SK-N-SH (cell line): ENCODE measurements at regions of chr3 and their contacts with region 1.

Region 1: DNA sequence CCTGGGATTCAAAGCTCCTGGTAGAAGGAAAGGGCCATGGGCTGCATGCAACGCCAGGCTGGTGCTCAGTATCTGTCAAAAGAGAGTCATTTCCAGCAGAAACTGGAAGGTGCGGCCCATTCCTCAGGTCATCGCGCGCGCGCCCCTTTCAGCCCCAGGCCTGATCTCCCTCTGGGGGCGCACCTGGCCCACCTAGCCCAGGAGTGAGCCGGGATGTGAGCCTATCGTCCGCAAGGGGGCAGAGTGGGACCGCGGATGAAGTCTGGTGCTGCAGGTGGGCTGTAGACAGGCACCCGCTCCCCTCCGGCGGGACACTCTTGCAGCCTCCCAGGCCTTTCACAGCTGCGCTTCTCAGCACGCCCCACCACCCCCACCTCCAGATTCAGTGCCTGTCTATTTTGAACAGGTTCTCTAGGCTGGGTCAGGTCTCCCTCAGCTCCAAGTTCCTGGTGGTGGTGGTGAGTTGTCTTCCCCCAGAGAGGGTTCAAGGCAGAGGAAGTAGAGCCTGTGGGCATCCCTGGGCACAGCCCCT is 5.8 kb upstream of the RPL29 start:
- DNase-seq: peak; percentile 92
- H3K4me3 ChIP-seq: peak overlapping the region in 1 of 2 experiments; percentile 36; a peak in 1 of 4 replicates
- H3K27ac ChIP-seq: peak overlapping the region in 1 of 2 experiments; percentile 61; a peak in 2 of 4 replicates
- H3K4me1 ChIP-seq: peaks cover 20 to 48% of the 10 kb centered on the region in 2 experiments
- H3K27me3 ChIP-seq: no peaks in the 10 kb centered on the region
- CTCF ChIP-seq: peak; percentile 97
- EP300 ChIP-seq: no peak
- RAD21 ChIP-seq: peak; percentile 96

Region 2: GRCh38 chr3:51941798-51942602 is 59.5 kb before region 1 on chr3 and contains the starts of genes PARP3 and RRP9:
- CTCF ChIA-PET with region 1: interaction called, 17 read pairs
- POLR2A ChIA-PET with region 1: interaction called, 3 read pairs
- DNase-seq: peak; percentile 99
- H3K4me3 ChIP-seq: peak within 1 kb of the TSS; percentile 85 to 95
- H3K27ac ChIP-seq: peak within 1 kb of the TSS; percentile 85 to 97
- H3K4me1 ChIP-seq: peaks cover 11 to 18% of the 10 kb centered on the region in 2 experiments; a peak in 3 of 4 replicates
- H3K27me3 ChIP-seq: no peaks in the 10 kb centered on the region
- CTCF ChIP-seq: peak; percentile 98
- EP300 ChIP-seq: no peak; a peak in 1 of 4 replicates
- RAD21 ChIP-seq: peak; percentile 98
- polyA plus RNA-seq, gene PARP3: 31.1 and 35.2 TPM in 2 replicates
- polyA plus RNA-seq, gene RRP9: 49.6 and 52.0 TPM in 2 replicates

Region 3: DNA sequence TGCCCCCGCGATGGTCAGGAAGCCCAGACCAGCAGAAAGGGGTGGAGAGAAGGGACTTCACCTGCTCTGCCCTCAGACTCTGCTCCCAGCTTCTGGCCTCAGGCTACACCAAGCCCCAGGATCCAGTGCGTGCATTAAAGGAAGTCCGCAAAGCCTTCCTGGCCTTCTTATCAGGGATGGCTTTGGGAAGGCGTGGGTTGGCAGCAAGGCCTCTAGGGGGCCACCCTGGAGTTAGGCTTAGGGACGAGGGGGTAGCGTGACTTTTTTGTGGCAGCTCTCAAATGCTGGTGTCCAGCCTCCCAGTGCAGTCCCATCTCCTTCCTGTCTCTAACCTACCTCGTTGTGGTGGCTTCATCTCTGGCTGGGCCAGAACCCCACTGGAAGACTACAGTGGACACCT is 13.1 kb after region 1 on chr3:
- CTCF ChIA-PET with region 1: interaction called, 159 read pairs
- POLR2A ChIA-PET with region 1: interaction called, 4 read pairs
- DNase-seq: no peak
- H3K4me3 ChIP-seq: no peak overlapping the region
- H3K27ac ChIP-seq: peak overlapping the region in 1 of 2 experiments; percentile 98; a peak in 2 of 4 replicates
- H3K4me1 ChIP-seq: peaks cover 0 to 57% of the 10 kb centered on the region in 2 experiments; a peak in 1 of 4 replicates
- H3K27me3 ChIP-seq: no peaks in the 10 kb centered on the region
- CTCF ChIP-seq: peak; percentile 47
- EP300 ChIP-seq: no peak
- RAD21 ChIP-seq: peak; percentile 49

Region 4: DNA sequence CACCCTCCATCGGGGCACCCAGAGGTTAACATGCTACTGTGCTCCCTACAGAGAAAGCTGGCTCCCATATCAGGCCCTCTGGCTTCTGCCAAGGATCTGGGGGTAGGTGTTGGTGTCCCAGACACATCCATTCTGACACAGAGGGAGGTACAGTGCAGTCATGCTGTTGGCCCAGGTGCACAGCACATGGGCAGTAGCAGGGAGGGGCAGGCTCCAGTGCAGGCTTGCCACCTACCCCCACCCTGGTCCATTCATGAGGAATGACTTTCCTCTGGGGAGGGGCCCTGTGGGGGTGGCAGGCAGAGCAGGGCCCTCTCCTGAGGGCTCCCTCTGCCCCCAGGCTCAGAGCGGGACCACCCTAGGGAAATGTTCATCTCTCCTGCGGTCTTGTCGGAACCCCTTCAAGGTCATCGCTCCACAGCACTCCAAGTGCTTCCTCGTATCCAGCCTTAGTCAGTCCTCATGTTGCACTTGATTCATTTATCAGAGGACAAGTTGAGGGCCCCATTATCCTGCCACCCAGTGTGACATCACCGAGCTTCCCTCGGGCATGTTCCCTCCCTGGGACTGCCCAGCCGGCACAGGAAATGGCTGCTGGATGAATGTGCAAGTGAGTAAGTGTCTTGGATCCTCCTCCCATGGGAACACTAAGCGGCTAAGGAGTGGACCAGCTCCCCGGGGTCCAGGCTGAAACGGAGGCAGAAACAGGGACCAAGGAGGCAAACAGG is 44.8 kb after region 1 on chr3:
- CTCF ChIA-PET with region 1: interaction called, 983 read pairs
- POLR2A ChIA-PET with region 1: interaction called, 86 read pairs
- DNase-seq: peak; percentile 58
- H3K4me3 ChIP-seq: 0 out of 4 replicates have a peak overlapping the region, but pooled peaks of 1 of the 2 experiments have one; percentile 36
- H3K27ac ChIP-seq: peak overlapping the region; percentile 93 to 100
- H3K4me1 ChIP-seq: peaks cover 31 to 87% of the 10 kb centered on the region in 2 experiments
- H3K27me3 ChIP-seq: no peaks in the 10 kb centered on the region
- CTCF ChIP-seq: no peak
- EP300 ChIP-seq: peak in 1 of 2 experiments; percentile 65; a peak in 1 of 4 replicates
- RAD21 ChIP-seq: no peak

Region 5: DNA sequence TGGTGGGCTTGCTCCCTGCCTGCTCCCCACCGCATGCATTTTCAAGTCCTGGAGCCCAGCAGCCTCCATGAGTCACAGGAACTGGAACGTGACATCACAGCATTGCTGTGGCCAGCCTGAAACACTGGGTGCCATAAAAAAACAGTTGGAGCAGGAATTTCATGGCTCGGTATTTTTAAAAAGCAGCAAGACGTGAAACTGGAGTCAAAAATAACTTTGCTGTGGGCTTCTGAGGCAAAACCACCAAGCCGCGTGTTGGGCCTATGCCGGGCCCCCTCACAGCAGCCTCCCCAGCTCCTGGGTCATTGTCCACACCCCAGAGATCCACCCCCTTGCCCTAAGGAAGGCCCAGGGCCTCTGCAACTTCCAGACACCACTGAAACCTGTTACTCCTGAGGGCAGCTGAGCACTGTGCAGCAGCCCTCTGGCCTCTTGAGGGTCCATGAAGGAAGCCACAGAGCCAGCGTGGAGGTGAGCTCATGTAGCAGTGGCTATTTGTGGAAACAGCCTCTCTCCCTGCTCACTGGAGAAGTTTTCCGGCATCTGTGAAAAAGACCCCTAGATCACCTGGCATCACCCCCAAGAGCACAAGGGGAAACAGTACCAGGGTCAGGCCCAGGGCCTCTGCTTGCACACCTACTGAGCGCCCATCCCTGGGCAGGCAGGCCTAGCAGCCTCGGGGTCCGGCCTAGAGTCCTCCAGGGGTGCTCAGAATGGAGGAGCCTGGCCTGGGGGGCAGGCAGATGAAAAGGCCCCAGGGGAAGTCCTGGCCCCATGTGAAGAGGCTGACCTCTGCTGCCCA is 88.8 kb after region 1 on chr3:
- CTCF ChIA-PET with region 1: interaction called, 21 read pairs
- POLR2A ChIA-PET with region 1: no interaction called
- DNase-seq: no peak
- H3K4me3 ChIP-seq: no peak overlapping the region
- H3K27ac ChIP-seq: peak overlapping the region; percentile 53 to 93
- H3K4me1 ChIP-seq: peaks cover 28 to 53% of the 10 kb centered on the region in 2 experiments
- H3K27me3 ChIP-seq: no peaks in the 10 kb centered on the region
- CTCF ChIP-seq: no peak
- EP300 ChIP-seq: no peak
- RAD21 ChIP-seq: no peak

Region 6: GRCh38 chr3:52130966-52131622 is 129.6 kb after region 1 on chr3:
- CTCF ChIA-PET with region 1: interaction called, 608 read pairs
- POLR2A ChIA-PET with region 1: interaction called, 5 read pairs
- DNase-seq: no peak
- H3K4me3 ChIP-seq: no peak overlapping the region
- H3K27ac ChIP-seq: no peak overlapping the region
- H3K4me1 ChIP-seq: peaks cover 6 to 13% of the 10 kb centered on the region in 2 experiments; a peak in 2 of 4 replicates
- H3K27me3 ChIP-seq: no peaks in the 10 kb centered on the region
- CTCF ChIP-seq: no peak
- EP300 ChIP-seq: no peak
- RAD21 ChIP-seq: no peak